GM10248 (cell line): ENCODE measurements at regions of chr10 and their contacts with region 1.

Region 1: GRCh38 chr10:114304017-114304570 is 65.0 kb downstream of the VWA2 start:
- DNase-seq: peak; percentile 84
- CTCF ChIP-seq: peak; percentile 91

Region 2: GRCh38 chr10:113982769-113983168 is 321.3 kb before region 1 on chr10:
- CTCF ChIA-PET with region 1: no interaction called
- POLR2A ChIA-PET with region 1: no interaction called
- DNase-seq: peak; percentile 33
- CTCF ChIP-seq: no peak

Region 3: GRCh38 chr10:114323023-114323422 is 18.9 kb after region 1 on chr10:
- CTCF ChIA-PET with region 1: interaction called, 13 read pairs
- POLR2A ChIA-PET with region 1: no interaction called
- DNase-seq: no peak
- CTCF ChIP-seq: no peak

Region 4: DNA sequence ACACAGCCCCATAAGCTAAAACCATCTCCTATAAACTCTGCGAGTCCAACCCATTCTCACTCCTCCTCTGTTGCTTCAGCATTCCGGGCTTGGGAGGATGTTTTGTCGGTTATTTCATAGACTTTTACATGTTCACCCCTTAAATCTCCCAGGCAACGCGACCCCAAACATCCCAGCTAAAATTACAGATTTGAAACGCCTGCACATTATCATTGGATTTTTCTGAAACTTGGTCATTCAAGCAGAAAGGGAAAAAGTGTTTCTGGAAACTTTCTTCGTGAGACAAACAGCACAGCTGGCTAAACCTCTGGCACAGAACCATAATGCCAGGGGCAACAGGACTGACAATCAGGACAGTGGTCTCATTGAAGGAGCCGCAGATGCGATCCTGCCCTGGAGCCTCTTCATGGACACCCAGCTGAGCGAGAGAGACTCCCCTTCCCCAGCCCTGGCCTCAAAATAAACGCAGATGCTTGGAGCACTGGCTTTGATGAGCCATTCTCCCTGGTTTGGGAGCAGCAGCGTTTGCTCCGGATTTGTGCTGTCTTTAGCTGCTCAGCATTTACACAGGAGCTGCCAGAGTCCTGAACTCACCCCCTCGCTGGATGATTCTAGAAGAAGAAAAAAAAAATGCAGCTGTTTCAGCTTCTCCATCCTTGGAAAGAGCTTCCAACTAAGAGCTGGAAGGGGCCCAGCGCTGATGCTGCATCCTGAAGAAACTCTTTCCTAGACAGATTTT is 70.1 kb after region 1 on chr10:
- CTCF ChIA-PET with region 1: interaction called, 12 read pairs
- POLR2A ChIA-PET with region 1: no interaction called
- DNase-seq: no peak
- CTCF ChIP-seq: no peak

Region 5: GRCh38 chr10:114418109-114418508 is 114.0 kb after region 1 on chr10:
- CTCF ChIA-PET with region 1: interaction called, 15 read pairs
- POLR2A ChIA-PET with region 1: no interaction called
- DNase-seq: no peak
- CTCF ChIP-seq: no peak

Region 6: GRCh38 chr10:114437456-114438292 is 133.6 kb after region 1 on chr10:
- CTCF ChIA-PET with region 1: interaction called, 25 read pairs
- POLR2A ChIA-PET with region 1: no interaction called
- DNase-seq: peak; percentile 40
- CTCF ChIP-seq: peak; percentile 22

Region 7: DNA sequence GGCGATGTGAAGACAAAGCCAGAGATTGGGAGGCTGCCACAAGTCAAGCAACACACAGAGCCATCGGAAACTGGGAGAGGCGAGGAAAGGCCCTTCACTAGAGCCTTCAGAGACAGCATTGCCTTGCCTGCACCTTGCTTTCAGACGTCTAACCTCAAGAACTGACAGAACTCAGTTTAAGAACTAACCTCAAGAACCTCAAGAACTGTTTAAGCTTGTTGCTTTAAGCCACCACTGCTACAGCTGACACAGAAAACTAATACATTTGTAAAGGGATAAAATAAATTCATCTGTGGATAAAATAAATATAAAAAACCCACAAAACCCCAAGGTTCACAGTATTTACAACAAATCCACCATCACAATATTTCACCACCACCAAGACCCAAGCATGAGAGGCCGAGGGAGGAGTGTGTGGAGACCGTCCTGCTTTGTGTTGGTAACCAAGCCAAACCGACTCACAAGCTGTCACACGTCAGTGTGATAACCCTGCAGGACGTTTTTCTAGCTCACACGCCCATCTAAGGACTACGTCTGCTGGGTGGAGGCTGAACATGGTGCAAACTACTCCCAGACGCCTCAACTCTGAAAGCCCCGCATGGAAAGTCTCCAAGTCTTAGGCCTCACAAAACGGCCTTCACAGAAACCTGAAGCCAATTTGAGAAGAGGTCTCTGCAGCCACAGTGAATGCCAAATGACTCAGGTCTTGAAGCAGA is 237.1 kb after region 1 on chr10:
- CTCF ChIA-PET with region 1: interaction called, 12 read pairs
- POLR2A ChIA-PET with region 1: no interaction called
- DNase-seq: no peak
- CTCF ChIP-seq: no peak